RWPE1 (cell line): ENCODE measurements at regions of chr6 and their contacts with region 1.

Region 1: DNA sequence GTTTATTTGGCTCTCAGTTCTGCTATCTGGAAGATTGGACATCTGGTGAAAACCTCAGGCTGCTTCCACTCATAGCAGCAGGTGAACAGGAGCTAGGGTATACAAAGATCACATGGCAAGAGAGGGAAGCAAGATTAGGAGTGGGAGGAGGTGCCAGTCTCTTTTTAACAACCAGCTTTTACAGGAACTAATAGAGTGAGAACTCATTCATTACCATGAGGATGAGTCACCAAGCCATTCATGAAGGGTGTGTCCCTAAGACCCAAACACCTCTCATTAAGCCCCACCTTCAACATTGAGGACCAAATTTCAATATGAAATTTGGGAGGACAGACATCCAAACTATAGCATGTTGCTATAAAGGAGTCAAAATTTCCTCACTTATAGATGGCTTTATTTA is 85.4 kb upstream of the HCRTR2 start:
- DNase-seq: no peak
- H3K27ac ChIP-seq: no peak overlapping the region
- CTCF ChIP-seq: no peak

Region 2: DNA sequence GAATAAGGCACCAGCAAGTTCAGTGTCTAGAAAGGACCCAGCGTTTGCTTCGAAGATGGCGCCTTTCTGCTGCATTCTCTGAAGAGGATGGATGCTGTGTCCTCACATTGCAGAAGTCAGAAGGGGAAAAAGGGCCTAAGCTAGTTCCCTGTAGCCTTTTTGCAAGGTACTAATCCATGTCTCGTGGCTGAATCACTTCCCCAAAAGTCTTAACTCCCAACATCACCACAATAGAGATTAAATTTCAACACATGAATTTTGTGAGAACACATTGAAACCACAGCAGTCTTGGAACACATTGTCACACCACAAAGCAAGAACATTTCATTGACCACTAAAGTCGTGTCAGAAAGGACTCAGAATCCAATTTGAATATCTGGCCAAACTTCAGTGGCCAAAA is 1465.4 kb before region 1 on chr6:
- CTCF ChIA-PET with region 1: interaction called, 12 read pairs
- POLR2A ChIA-PET with region 1: no interaction called
- DNase-seq: no peak
- H3K27ac ChIP-seq: no peak overlapping the region
- CTCF ChIP-seq: no peak

Region 3: DNA sequence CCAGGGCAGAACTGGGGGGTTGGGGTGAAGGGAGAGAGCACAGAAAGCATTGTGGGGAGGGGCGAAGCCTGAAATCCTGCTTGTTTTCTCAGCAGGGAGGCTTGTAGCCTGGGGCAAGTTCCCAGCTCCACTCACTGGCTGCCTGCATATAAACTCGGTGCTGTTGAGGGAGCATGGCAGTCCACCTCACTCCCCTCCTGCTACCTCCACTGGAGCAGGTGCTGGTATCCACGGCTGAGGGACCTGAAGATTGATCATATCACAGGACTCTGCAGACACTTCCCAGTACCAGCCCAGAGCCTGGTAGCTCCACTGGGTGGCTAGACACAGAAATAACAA is 19.9 kb after region 1 on chr6:
- CTCF ChIA-PET with region 1: no interaction called
- POLR2A ChIA-PET with region 1: no interaction called
- DNase-seq: no peak
- H3K27ac ChIP-seq: no peak overlapping the region
- CTCF ChIP-seq: no peak